Mammary epithelial cell (primary cell): ENCODE measurements at regions of chr17 and their contacts with region 1.

Region 1: DNA sequence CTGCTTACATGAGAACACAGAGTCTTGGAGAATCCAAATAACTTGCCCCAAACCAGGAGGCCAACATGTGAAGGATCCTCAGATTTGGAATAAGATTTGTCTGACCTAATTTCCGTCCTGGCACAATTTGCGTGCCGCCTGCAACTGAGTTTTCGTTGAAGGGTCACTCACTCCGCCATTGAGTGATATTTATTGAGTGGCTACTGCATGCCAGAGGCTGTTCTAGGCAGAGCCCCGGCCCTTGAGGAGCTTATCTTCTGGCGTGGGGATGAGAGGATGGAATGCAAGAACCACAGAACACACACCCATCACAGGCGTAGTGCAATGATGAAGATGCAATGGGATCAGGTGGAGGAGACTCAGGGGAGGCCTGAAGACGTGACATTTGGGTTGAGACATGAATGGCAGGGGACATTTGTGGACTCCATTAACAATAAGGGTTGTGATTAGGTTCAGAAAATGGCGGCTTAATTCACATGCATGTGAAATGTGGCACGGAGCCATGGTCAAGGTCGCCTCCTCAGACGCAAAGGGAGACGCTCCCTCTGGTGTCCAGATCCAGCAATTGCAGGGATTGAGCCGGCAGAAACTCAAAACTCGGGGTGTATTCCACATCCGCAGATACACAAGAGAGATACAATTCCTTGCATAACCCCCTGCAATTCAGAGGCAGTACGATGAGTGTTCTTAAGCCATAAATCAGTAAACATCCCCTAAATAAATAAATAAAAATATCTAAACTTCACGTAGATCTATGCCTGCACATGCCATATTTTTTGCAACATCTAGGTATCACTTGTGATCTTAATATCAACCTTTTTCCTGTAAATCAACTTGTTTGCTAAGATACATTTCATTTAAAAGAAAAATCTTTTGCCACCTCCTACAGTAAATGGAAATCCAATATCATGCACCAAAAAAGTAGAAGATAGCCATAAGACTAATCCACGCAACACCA is 57.9 kb upstream of the CACNG4 start:
- DNase-seq: peak; percentile 59
- H3K4me3 ChIP-seq: no peak overlapping the region
- H3K27ac ChIP-seq: no peak overlapping the region
- H3K4me1 ChIP-seq: peaks cover 19% of the 10 kb centered on the region
- H3K27me3 ChIP-seq: no peaks in the 10 kb centered on the region
- CTCF ChIP-seq: peak; percentile 96 to 97

Region 2: DNA sequence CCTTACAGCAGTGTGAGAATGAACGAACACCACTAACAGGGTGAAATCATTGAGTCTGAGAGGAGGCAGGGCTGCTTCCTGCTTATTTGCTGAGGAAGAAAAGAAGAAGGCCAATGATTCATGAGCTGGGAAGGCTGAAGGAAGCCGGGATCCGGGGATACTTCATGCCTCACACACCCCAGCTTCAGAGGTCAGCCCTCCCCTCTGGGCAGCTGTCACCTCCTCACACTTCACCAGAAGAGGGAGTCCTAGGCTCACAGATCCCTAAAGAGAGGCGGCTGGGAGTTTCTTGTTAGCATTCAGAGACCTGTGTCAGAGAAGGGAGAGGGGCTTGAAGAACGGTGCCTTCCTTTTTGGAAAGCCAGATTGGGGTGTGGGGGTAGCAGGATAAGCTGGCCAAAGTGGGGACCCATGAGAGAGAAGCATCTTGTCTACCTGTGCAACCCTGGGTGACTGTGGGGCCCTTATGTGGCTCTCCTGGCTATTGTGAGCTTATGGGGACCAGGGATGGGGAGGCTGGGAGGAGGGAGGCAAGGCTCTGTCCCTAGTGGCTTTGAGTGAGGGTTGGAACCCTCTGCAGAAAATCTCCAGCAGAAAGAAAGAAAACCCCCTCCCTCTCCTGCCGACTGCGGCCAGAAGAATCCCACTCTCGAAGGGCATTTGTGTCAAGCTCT is 1674.8 kb before region 1 on chr17:
- CTCF ChIA-PET with region 1: no interaction called
- dilution Hi-C with region 1: no loop called
- in situ Hi-C with region 1: no loop called
- intact Hi-C with region 1: loop called (anchors 10 kb)
- DNase-seq: peak; percentile 72
- H3K4me3 ChIP-seq: no peak overlapping the region
- H3K27ac ChIP-seq: no peak overlapping the region
- H3K4me1 ChIP-seq: no peaks in the 10 kb centered on the region
- H3K27me3 ChIP-seq: no peaks in the 10 kb centered on the region
- CTCF ChIP-seq: peak; percentile 76 to 86

Region 3: DNA sequence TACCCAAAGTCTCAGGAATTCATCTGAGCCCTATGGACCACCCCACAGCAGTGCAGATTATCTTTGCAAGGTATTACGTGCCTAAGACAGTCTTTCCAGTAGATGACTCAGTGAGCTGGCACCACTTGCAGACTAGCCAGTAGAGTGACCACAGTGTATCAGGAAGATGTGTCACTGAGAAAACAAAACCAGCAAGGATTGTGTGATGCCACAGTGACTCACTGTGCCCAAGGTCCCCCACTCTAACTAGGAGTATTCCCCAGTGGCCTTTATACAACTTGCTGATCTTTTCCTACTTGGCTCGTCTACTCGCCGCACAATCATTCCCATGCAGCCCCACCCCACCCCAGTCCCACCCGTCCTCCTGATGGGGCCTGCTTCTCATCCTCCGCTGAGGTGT is 630.9 kb before region 1 on chr17:
- CTCF ChIA-PET with region 1: no interaction called
- dilution Hi-C with region 1: no loop called
- in situ Hi-C with region 1: no loop called
- intact Hi-C with region 1: loop called (anchors 10 kb)
- DNase-seq: peak; percentile 94
- H3K4me3 ChIP-seq: no peak overlapping the region
- H3K27ac ChIP-seq: no peak overlapping the region
- H3K4me1 ChIP-seq: peaks cover 36% of the 10 kb centered on the region
- H3K27me3 ChIP-seq: no peaks in the 10 kb centered on the region
- CTCF ChIP-seq: peak in 1 of 2 donors; percentile 24

Region 4: DNA sequence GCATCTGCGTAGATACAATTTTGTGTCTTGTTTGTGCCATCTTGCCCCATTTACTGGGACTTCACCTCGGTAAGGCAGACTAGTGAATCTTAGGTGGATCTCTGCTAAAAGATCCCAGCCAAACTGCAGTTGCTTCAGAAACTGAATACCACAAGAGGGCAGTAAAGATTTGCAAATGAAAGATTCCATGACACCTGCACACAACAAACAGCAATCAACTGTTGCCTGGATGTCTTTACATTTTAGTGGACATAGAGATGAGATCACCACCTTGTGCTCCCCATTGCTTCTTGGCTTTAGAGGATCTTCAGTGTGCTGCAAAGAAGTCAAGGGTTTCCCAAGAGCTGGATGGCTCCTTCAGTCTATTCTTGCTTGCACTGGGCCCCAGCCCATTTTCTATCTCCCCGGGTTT is 190.8 kb before region 1 on chr17:
- CTCF ChIA-PET with region 1: no interaction called
- dilution Hi-C with region 1: no loop called
- in situ Hi-C with region 1: loop called (anchors 5 to 10 kb)
- intact Hi-C with region 1: loop called (anchors 1 kb)
- DNase-seq: peak; percentile 61
- H3K4me3 ChIP-seq: no peak overlapping the region
- H3K27ac ChIP-seq: no peak overlapping the region
- H3K4me1 ChIP-seq: peaks cover 17% of the 10 kb centered on the region
- H3K27me3 ChIP-seq: no peaks in the 10 kb centered on the region
- CTCF ChIP-seq: peak; percentile 58 to 77

Region 5: GRCh38 chr17:66727639-66728570 is 178.7 kb before region 1 on chr17:
- CTCF ChIA-PET with region 1: interaction called, 5 read pairs
- dilution Hi-C with region 1: no loop called
- in situ Hi-C with region 1: no loop called
- intact Hi-C with region 1: loop called (anchors 1 kb)
- DNase-seq: peak; percentile 29
- H3K4me3 ChIP-seq: no peak overlapping the region
- H3K27ac ChIP-seq: no peak overlapping the region
- H3K4me1 ChIP-seq: no peaks in the 10 kb centered on the region
- H3K27me3 ChIP-seq: no peaks in the 10 kb centered on the region
- CTCF ChIP-seq: peak; percentile 64 to 83

Region 6: DNA sequence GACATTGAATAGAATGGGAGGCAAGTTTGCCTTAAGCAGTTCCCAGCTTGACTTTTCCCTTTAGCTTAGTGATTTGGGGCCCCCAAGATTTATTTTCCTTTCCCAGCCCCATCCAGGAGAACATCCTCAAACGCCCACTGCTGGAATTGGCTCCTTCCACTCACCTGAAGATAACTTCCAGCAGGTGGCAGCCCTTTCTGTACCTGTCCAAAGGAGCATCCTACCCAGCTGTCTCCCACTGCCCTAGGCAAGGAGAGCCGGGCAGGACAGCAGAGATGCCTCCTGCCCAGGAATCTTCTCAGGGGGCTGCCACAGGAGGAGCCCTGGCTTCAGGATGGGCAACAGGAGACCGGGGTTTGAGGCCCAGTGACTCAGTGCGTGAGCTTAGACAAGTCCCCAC is 65.3 kb before region 1 on chr17:
- CTCF ChIA-PET with region 1: no interaction called
- dilution Hi-C with region 1: no loop called
- in situ Hi-C with region 1: no loop called
- intact Hi-C with region 1: loop called (anchors 2 kb)
- DNase-seq: no peak
- H3K4me3 ChIP-seq: no peak overlapping the region
- H3K27ac ChIP-seq: no peak overlapping the region
- H3K4me1 ChIP-seq: no peaks in the 10 kb centered on the region
- H3K27me3 ChIP-seq: peaks cover 1% of the 10 kb centered on the region
- CTCF ChIP-seq: peak in 1 of 2 donors; percentile 37

Region 7: GRCh38 chr17:66889480-66890230 is 16.9 kb before region 1 on chr17:
- CTCF ChIA-PET with region 1: interaction called, 15 read pairs
- dilution Hi-C with region 1: no loop called
- in situ Hi-C with region 1: no loop called
- intact Hi-C with region 1: no loop called
- DNase-seq: peak; percentile 37
- H3K4me3 ChIP-seq: no peak overlapping the region
- H3K27ac ChIP-seq: no peak overlapping the region
- H3K4me1 ChIP-seq: no peaks in the 10 kb centered on the region
- H3K27me3 ChIP-seq: no peaks in the 10 kb centered on the region
- CTCF ChIP-seq: no peak